ENCODE measurements at regions of chr10 and their contacts with region 1.

Region 1: DNA sequence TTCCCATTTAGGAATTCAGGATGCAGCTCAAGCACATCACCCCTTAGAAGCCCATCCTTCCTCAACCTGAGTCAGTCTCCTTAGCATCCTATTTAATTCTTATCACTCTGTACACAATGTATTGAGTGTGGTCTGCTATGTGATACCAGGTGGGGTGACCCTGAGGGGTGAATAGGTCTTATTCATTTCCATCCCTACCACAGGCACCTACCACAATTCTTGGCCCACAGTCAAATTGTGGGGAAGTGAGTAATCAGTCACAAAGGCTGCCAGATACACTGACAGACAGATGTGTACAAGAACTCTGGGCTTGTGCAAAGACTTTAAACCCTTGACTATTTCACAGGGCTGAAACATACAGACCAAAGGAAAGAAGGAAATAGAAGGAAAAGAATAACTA is 560.5 kb downstream of the PARD3 start:
- DNase-seq: peak; percentile 100
- ATAC-seq: peak; percentile 89
- H3K4me3 ChIP-seq: no peak overlapping the region
- H3K27ac ChIP-seq: peak overlapping the region; percentile 3
- H3K4me1 ChIP-seq: peaks cover 28% of the 10 kb centered on the region
- H3K27me3 ChIP-seq: no peaks in the 10 kb centered on the region
- CTCF ChIP-seq: no peak

Region 2: DNA sequence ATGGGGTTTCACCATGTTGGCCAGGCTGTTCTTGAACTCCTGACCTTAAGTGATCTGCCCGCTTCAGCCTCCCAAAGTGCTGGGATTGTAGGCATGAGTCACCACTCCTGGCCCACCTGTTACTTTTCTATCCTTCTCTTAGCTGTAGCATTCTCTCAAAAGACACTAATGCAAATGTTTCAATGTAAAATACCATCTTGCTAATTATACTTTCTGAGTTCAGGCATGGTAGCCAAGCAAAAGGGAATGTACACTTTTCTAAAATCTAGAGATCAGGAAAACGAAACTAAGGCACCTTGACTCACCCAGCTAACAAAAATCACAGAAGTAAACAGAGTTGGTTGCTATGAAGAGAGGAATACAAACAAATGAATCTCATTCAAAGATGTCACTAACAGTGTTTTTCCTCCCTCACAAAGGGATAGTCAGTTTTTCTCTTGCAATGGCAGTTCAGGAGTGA is 519.1 kb before region 1 on chr10:
- CTCF ChIA-PET with region 1: no interaction called
- POLR2A ChIA-PET with region 1: interaction called, 13 read pairs
- intact Hi-C with region 1: no loop called
- DNase-seq: peak; percentile 82
- ATAC-seq: peak; percentile 80
- H3K4me3 ChIP-seq: no peak overlapping the region
- H3K27ac ChIP-seq: peak overlapping the region; percentile 36
- H3K4me1 ChIP-seq: peaks cover 14% of the 10 kb centered on the region
- H3K27me3 ChIP-seq: no peaks in the 10 kb centered on the region
- CTCF ChIP-seq: no peak

Region 3: GRCh38 chr10:34235164-34235832 is 19.3 kb before region 1 on chr10:
- CTCF ChIA-PET with region 1: no interaction called
- POLR2A ChIA-PET with region 1: interaction called, 3 read pairs
- intact Hi-C with region 1: loop called (anchors 1 kb)
- DNase-seq: peak; percentile 100
- ATAC-seq: peak; percentile 100
- H3K4me3 ChIP-seq: peak overlapping the region; percentile 42
- H3K27ac ChIP-seq: peak overlapping the region; percentile 47
- H3K4me1 ChIP-seq: peaks cover 18% of the 10 kb centered on the region
- H3K27me3 ChIP-seq: no peaks in the 10 kb centered on the region
- CTCF ChIP-seq: no peak